ENCODE measurements at regions of chr4 and their contacts with region 1.

Region 1: GRCh38 chr4:15756361-15756861 is 21.7 kb upstream of the CD38 start:
- DNase-seq: peak; percentile 87
- ATAC-seq: peak; percentile 82
- H3K4me3 Mint-ChIP-seq: peak overlapping the region; percentile 60
- H3K27ac Mint-ChIP-seq: peak overlapping the region; percentile 96
- H3K4me1 Mint-ChIP-seq: peaks cover 45% of the 10 kb centered on the region
- H3K27me3 Mint-ChIP-seq: no peaks in the 10 kb centered on the region

Region 2: DNA sequence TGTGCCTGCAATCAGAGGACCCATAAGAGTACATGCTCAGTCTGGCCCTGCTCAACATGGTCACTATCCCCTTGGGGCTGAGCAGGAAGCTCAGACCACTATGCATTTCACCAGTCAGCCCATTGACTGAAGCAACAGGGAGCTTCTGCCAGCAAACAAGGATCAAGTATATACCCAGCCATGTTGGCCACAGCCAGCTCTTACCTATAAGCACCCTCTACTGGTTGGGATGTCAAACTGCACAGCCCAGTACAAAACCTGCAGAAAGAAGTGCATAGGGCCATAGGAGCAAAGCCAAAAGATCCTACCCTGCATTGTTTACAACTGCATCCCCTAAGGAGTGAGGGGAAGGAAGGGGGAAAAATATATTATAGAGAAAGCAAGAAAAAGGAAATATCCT is 968.5 kb before region 1 on chr4:
- CTCF ChIA-PET with region 1: no interaction called
- POLR2A ChIA-PET with region 1: no interaction called
- intact Hi-C with region 1: loop called in 1 of 2 experiments (anchors 10 kb)
- DNase-seq: peak; percentile 42
- ATAC-seq: peak; percentile 27
- H3K4me3 Mint-ChIP-seq: no peak overlapping the region
- H3K27ac Mint-ChIP-seq: no peak overlapping the region
- H3K4me1 Mint-ChIP-seq: peaks cover 35% of the 10 kb centered on the region
- H3K27me3 Mint-ChIP-seq: peaks cover 18% of the 10 kb centered on the region

Region 3: GRCh38 chr4:15479089-15479912 is 277.1 kb before region 1 on chr4:
- CTCF ChIA-PET with region 1: no interaction called
- POLR2A ChIA-PET with region 1: no interaction called
- intact Hi-C with region 1: no loop called
- DNase-seq: peak; percentile 15
- ATAC-seq: peak; percentile 39
- H3K4me3 Mint-ChIP-seq: no peak overlapping the region
- H3K27ac Mint-ChIP-seq: no peak overlapping the region
- H3K4me1 Mint-ChIP-seq: no peaks in the 10 kb centered on the region
- H3K27me3 Mint-ChIP-seq: no peaks in the 10 kb centered on the region

Region 4: GRCh38 chr4:15601862-15602261 is 154.5 kb before region 1 on chr4:
- CTCF ChIA-PET with region 1: no interaction called
- POLR2A ChIA-PET with region 1: no interaction called
- intact Hi-C with region 1: no loop called
- DNase-seq: no peak
- ATAC-seq: no peak
- H3K4me3 Mint-ChIP-seq: no peak overlapping the region
- H3K27ac Mint-ChIP-seq: no peak overlapping the region
- H3K4me1 Mint-ChIP-seq: peaks cover 3% of the 10 kb centered on the region
- H3K27me3 Mint-ChIP-seq: no peaks in the 10 kb centered on the region

Region 5: DNA sequence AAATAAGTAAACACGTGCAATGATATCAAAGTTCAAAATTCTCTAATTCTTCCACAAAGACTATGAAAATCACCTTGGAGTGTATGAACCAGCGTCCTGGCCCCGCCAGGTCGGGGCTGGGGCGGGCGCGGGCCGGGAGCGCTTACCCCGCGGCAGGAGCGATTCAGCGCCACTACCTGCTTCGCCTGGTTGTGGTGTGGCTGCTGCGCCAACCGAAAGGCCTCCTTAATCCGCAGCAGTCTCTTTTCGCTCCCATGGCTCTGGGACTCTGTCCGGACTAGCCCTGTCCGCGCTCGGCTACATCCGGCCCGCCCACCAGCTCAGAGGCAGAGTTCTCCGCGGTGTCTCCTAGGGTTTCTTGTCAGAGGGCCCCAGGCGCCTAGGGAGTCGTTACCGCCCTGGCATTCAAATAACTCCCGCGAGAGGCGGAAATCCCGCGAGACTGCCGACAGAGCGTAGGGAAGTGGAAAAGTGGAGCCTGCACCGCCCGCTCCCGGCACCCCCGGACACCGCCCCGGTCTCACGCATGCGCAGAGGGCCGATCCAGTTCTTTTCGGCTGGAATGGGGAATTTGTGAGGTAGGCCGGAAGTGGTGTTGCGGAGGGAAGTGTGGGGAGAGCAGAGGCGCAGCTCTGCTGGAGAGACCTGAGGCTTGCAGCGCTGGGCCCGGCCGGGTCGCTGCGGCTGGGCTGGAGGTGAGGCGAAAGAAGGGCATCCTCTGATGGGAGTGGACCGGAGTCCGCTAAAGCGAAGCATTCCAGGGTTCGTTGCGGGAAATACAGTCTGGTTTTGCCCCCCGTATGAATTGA is 75.0 kb before region 1 on chr4 and contains the start of gene FAM200B:
- CTCF ChIA-PET with region 1: interaction called, 5 read pairs
- POLR2A ChIA-PET with region 1: no interaction called
- intact Hi-C with region 1: loop called in 1 of 2 experiments (anchors 1 kb)
- DNase-seq: peak; percentile 99
- ATAC-seq: peak; percentile 98
- H3K4me3 Mint-ChIP-seq: peak within 1 kb of the TSS; percentile 98
- H3K27ac Mint-ChIP-seq: peak within 1 kb of the TSS; percentile 96
- H3K4me1 Mint-ChIP-seq: peaks cover 39% of the 10 kb centered on the region
- H3K27me3 Mint-ChIP-seq: no peaks in the 10 kb centered on the region
- total RNA-seq, gene FAM200B: 9.8 to 13.3 TPM

Region 6: DNA sequence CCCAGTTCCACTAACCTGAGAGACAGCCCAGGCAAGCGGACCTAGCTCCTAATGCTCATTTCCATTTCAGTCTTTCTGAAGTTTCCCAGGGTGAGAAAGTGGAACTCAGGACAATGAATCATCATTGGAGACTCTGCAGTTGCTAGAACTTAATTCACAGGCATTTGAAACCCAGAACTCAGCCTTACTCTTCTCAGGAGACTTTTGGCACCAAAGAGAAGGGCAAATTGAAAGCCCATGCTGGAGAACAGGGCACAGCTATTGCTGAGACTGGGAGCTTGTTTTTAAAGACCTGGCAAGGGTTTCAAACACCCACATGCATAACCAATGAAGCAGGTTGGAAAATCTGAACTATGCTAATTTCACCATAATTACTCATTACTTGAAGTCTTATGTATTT is 17.5 kb before region 1 on chr4:
- CTCF ChIA-PET with region 1: interaction called, 44 read pairs
- POLR2A ChIA-PET with region 1: interaction called, 4 read pairs
- intact Hi-C with region 1: loop called (anchors 1 kb)
- DNase-seq: peak; percentile 16
- ATAC-seq: peak; percentile 85
- H3K4me3 Mint-ChIP-seq: no peak overlapping the region
- H3K27ac Mint-ChIP-seq: peak overlapping the region; percentile 58
- H3K4me1 Mint-ChIP-seq: peaks cover 40% of the 10 kb centered on the region
- H3K27me3 Mint-ChIP-seq: no peaks in the 10 kb centered on the region

Region 7: DNA sequence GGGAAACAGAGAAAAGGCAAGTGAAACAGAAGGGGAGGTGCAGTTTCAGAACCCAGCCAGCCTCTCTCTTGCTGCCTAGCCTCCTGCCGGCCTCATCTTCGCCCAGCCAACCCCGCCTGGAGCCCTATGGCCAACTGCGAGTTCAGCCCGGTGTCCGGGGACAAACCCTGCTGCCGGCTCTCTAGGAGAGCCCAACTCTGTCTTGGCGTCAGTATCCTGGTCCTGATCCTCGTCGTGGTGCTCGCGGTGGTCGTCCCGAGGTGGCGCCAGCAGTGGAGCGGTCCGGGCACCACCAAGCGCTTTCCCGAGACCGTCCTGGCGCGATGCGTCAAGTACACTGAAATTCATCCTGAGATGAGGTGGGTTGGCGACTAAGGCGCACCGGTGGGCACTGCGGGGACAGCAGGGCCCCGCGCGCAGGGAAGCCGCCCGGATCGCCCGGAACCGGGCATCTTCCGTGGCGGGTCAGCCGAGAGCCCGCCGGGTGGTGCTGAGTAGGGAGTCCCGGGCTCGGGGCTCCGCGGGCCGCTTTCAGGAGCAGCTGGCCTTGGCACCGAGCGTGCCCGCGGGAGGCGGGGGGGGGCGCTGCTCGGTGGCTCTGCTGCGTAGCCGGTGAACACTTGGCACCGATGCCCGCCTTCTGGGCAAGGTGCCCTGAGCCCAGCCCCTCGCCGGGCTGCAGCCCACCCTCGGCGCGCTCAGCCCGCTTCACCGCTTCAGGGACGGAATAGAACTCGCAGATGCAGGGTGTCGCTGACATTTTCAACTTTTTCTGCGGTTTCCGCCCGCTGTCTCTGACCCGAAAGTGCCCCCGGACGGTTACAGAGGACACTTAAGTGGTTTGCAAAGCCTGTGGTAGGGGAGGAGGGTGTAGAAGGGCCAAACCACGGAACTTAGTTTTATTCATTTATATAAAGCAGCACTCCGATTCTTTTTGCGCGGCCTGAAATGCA is 22.2 kb after region 1 on chr4 and contains the start of gene CD38:
- CTCF ChIA-PET with region 1: interaction called, 17 read pairs
- POLR2A ChIA-PET with region 1: interaction called, 6 read pairs
- intact Hi-C with region 1: loop called (anchors 1 kb)
- DNase-seq: peak; percentile 76
- ATAC-seq: peak; percentile 76
- H3K4me3 Mint-ChIP-seq: peak within 1 kb of the TSS; percentile 84
- H3K27ac Mint-ChIP-seq: peak within 1 kb of the TSS; percentile 86
- H3K4me1 Mint-ChIP-seq: peaks cover 70% of the 10 kb centered on the region
- H3K27me3 Mint-ChIP-seq: peaks cover 30% of the 10 kb centered on the region
- total RNA-seq, gene CD38: 15.0 to 17.3 TPM

Region 8: GRCh38 chr4:15805583-15806517 is 49.4 kb after region 1 on chr4:
- CTCF ChIA-PET with region 1: interaction called, 23 read pairs
- POLR2A ChIA-PET with region 1: no interaction called
- intact Hi-C with region 1: no loop called
- DNase-seq: peak; percentile 60
- ATAC-seq: peak; percentile 82
- H3K4me3 Mint-ChIP-seq: no peak overlapping the region
- H3K27ac Mint-ChIP-seq: no peak overlapping the region
- H3K4me1 Mint-ChIP-seq: peaks cover 38% of the 10 kb centered on the region
- H3K27me3 Mint-ChIP-seq: no peaks in the 10 kb centered on the region

Measured in activated CD4-positive, alpha-beta T cell treated with anti-CD3 and anti-CD28 coated beads for 36 hours (primary cell).